Ascending aorta (tissue), 2 donors: ENCODE measurements at regions of chr14 and their contacts with region 1.

Region 1: DNA sequence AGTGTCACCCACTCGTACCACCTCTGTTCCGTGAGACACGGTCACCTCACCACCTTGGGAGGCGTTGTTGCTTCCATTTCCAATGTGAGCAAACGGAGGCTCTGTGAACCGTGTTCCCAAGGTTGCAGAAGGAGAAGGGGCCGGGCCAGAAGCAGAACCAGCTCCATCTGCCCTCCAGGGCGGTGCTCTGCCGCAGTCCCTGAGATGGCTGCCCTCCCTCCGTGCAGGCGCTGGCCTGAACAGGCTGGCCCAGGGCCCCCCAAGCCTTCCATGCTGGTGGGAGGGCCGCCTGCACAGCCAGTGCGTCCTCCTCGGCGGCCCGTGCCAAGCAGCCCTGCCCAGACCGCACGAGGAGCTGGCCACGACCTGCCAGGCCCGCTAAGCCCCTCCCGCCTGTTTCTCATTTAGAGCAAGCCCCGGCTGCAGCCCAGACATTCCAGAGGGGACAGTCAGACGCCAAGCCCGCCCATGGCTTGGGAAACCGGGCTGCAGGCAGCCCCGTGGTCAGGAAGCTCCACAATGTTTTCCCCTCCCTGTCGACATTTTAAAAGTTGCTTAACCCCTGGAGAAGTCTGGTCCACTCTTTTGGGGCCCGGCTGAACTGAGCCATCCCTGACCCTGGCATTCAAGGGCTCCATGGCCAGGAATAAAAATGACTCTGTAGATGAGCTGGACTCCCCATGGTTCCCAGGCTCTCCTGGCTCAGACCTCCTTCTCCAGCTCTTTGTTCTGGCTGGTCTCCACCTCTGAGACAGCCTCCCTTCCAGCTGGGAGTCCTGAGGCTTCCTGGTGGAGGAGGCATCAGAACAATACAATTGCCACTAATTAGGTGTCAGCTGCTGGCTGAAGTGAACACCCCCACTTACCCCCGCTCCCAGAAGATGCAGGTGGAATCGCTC is 236.0 kb downstream of the BCL11B start:
- DNase-seq: peak; percentile 84 to 98
- H3K4me3 ChIP-seq: peak overlapping the region; percentile 10 to 50
- H3K27ac ChIP-seq: peak overlapping the region; percentile 84 to 91
- H3K4me1 ChIP-seq: peaks cover 6 to 20% of the 10 kb centered on the region in 2 donors
- H3K27me3 ChIP-seq: no peaks in the 10 kb centered on the region
- CTCF ChIP-seq: no peak

Region 2: DNA sequence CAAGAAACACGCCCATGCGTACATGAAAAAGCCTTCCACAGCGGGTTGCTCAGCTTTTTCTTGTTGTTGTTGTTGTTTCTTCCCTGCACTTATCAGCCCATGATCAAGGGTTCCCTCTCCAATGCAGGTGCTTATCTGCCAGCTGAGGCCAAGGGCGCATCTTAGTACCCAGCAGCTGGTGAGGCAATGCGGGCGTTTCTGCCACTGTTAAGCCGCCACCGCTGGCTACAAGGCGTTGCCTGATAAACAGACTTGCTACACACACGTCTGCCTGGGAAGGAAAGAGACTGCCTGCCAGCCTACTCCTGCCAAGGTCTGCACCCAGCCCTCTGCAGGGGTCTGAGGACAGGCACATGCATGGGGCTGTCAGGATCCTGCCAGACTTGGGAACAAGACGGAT is 109.8 kb before region 1 on chr14:
- intact Hi-C with region 1: loop called (anchors 5 kb)
- DNase-seq: no peak
- H3K4me3 ChIP-seq: no peak overlapping the region
- H3K27ac ChIP-seq: no peak overlapping the region
- H3K4me1 ChIP-seq: peaks cover 0 to 3% of the 10 kb centered on the region in 2 donors
- H3K27me3 ChIP-seq: no peaks in the 10 kb centered on the region
- CTCF ChIP-seq: no peak

Region 3: GRCh38 chr14:98957211-98958047 is 78.5 kb before region 1 on chr14:
- intact Hi-C with region 1: loop called (anchors 2 kb)
- DNase-seq: peak; percentile 59 to 92
- H3K4me3 ChIP-seq: no peak overlapping the region
- H3K27ac ChIP-seq: peak overlapping the region; percentile 19 to 29
- H3K4me1 ChIP-seq: peaks cover 0 to 3% of the 10 kb centered on the region in 2 donors
- H3K27me3 ChIP-seq: no peaks in the 10 kb centered on the region
- CTCF ChIP-seq: no peak

Region 4: DNA sequence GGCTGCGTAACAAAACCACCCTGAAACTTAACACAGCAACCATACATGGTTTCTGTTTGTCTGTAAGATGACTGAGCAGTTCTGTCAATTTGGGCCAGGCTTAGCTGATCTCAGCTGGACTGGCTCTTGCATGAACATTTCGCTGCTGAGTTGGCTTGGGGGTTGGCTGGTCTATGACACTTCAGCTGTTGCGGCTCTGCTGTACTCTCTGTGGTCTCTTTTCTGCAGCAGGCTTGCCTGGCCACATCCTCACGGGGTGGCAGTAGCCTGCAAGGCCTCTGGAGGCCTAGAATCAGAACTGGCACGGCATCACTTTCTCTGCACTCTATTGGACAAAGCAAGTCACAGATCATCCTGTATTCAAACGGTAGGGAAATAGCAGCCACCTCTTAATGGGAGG is 19.9 kb after region 1 on chr14:
- intact Hi-C with region 1: no loop called
- DNase-seq: peak in 1 of 2 donors; percentile 63
- H3K4me3 ChIP-seq: no peak overlapping the region
- H3K27ac ChIP-seq: no peak overlapping the region
- H3K4me1 ChIP-seq: no peaks in the 10 kb centered on the region
- H3K27me3 ChIP-seq: no peaks in the 10 kb centered on the region
- CTCF ChIP-seq: no peak

Region 5: GRCh38 chr14:99155173-99156089 is 119.5 kb after region 1 on chr14:
- intact Hi-C with region 1: loop called (anchors 10 kb)
- DNase-seq: peak in 1 of 2 donors; percentile 73
- H3K4me3 ChIP-seq: no peak overlapping the region
- H3K27ac ChIP-seq: no peak overlapping the region
- H3K4me1 ChIP-seq: peaks cover 4 to 10% of the 10 kb centered on the region in 2 donors
- H3K27me3 ChIP-seq: no peaks in the 10 kb centered on the region
- CTCF ChIP-seq: no peak

Region 6: DNA sequence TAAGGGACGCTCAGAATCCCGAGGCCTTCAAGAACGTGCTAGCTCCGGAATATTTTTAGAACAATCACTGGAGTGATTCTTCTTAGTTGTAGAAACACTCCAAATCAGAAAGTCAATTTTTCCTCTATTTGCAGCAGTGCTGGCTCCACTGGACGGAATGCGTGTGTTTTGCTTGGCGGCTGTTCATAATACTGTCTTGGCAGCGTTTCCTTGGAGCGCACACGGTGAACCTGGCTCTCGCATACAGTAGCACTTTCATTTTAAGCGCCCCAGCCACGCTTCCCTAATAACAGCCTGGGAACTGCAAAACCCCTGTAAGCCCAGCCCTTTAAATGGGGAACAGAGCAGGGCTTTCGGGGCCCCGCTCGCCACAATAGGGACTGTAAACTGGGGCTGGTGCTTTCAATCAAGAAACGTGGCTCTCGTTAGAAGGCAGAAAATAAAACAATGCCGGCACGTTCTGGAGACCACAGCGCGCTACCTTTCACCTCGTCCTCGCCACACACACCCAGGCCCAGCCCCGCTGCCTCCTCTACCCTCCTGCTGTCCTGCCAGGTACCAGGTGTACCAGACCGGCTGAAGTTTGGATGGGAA is 156.2 kb after region 1 on chr14:
- intact Hi-C with region 1: loop called (anchors 2 kb)
- DNase-seq: peak in 1 of 2 donors; percentile 79
- H3K4me3 ChIP-seq: peak overlapping the region; percentile 43 to 51
- H3K27ac ChIP-seq: no peak overlapping the region
- H3K4me1 ChIP-seq: peaks cover 6 to 7% of the 10 kb centered on the region in 2 donors
- H3K27me3 ChIP-seq: no peaks in the 10 kb centered on the region
- CTCF ChIP-seq: no peak

Region 7: GRCh38 chr14:99480917-99481744 is 445.2 kb after region 1 on chr14 and contains the start of gene CCNK:
- intact Hi-C with region 1: loop called (anchors 5 kb)
- DNase-seq: peak; percentile 100
- H3K4me3 ChIP-seq: peak within 1 kb of the TSS; percentile 87 to 95
- H3K27ac ChIP-seq: peak within 1 kb of the TSS; percentile 96 to 98
- H3K4me1 ChIP-seq: peaks cover 6 to 34% of the 10 kb centered on the region in 2 donors
- H3K27me3 ChIP-seq: no peaks in the 10 kb centered on the region
- CTCF ChIP-seq: no peak
- total RNA-seq, gene CCNK: 21.9 TPM